ENCODE measurements at regions of chr21 and their contacts with region 1.

Region 1: GRCh38 chr21:45322960-45323461 is 35.3 kb upstream of the POFUT2 start:
- DNase-seq: no peak
- ATAC-seq: no peak
- H3K4me3 ChIP-seq: no peak overlapping the region
- H3K4me3 Mint-ChIP-seq: peak overlapping the region in 8 of 10 donors; percentile 44 to 89 (median 84)
- H3K27ac ChIP-seq: peak overlapping the region; percentile 74
- H3K27ac Mint-ChIP-seq: peak overlapping the region in 8 of 9 donors; percentile 16 to 100 (median 96)
- H3K4me1 ChIP-seq: peaks cover 0 to 26% of the 10 kb centered on the region in 2 donors
- H3K4me1 Mint-ChIP-seq: peaks cover 4 to 21% (median 15%) of the 10 kb centered on the region in 7 donors
- H3K27me3 ChIP-seq: no peaks in the 10 kb centered on the region
- H3K27me3 Mint-ChIP-seq: peaks cover 0 to 2% (median 0%) of the 10 kb centered on the region in 5 donors

Region 2: GRCh38 chr21:45287438-45288391 is 35.3 kb before region 1 on chr21 and contains the start of gene POFUT2:
- CTCF ChIA-PET with region 1: interaction called, 4 read pairs
- POLR2A ChIA-PET with region 1: interaction called, 18 read pairs
- intact Hi-C with region 1: loop called in 1 of 2 experiments (anchors 2 kb)
- DNase-seq: peak; percentile 95 to 100 (median 98)
- ATAC-seq: peak; percentile 91
- H3K4me3 ChIP-seq: peak within 1 kb of the TSS; percentile 68
- H3K4me3 Mint-ChIP-seq: peak within 1 kb of the TSS; percentile 68 to 88 (median 87)
- H3K27ac ChIP-seq: peak within 1 kb of the TSS; percentile 97
- H3K27ac Mint-ChIP-seq: peak within 1 kb of the TSS; percentile 72 to 93 (median 87)
- H3K4me1 ChIP-seq: peaks cover 7 to 16% of the 10 kb centered on the region in 2 donors
- H3K4me1 Mint-ChIP-seq: peaks cover 11 to 46% (median 30%) of the 10 kb centered on the region in 7 donors
- H3K27me3 ChIP-seq: no peaks in the 10 kb centered on the region
- H3K27me3 Mint-ChIP-seq: peaks cover 0 to 10% (median 0%) of the 10 kb centered on the region in 5 donors
- total RNA-seq, gene POFUT2: 20.1 to 53.3 (median 47.8) TPM

Region 3: DNA sequence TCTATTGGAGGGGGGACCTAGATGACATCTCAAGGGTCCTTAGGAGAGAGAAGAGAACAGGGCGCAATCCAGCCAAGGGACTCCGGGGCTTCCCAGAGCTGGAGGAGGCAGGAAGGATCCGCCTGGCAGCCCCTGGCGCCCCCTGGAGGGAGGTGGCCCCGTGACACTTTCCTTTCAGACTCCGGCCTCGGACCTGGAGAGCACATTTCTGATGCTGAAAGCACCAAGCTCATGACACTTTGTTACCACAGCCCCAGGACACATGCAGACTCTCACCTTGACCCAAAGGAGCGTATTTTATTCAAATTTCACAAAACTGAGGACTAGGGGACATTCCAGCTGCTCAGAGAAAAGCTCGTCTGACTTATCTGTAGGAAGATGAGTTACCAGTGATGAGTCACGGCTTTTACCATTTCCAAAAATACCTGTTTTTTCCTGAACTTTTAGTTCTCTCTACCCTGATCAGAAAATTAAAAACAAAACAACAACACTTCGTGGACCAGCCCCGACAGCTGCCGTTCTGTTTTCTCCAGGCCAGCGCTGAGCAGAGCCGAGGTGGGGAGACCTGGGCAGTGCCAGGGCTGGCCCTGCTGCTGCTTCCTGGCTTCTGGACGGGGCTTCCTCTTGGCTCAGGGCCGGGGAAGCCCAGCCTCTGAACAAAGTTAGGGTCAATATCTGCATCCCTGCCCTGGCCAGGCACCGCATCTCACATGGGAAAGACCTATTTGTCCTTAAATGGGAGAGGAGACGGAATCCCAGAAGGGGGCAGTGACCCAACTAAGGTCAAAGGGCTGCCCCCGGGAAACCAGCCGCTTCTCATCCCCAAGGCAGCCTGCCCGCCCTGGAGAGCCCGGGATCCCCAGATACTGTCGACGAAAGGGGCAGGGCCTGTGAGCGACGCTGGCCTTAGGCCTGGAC is 13.7 kb before region 1 on chr21:
- CTCF ChIA-PET with region 1: interaction called, 5 read pairs
- POLR2A ChIA-PET with region 1: interaction called, 5 read pairs
- intact Hi-C with region 1: loop called in 1 of 2 experiments (anchors 2 kb)
- DNase-seq: peak in 3 of 9 donors; percentile 19 to 52 (median 44)
- ATAC-seq: peak; percentile 63
- H3K4me3 ChIP-seq: no peak overlapping the region
- H3K4me3 Mint-ChIP-seq: no peak overlapping the region
- H3K27ac ChIP-seq: peak overlapping the region; percentile 19
- H3K27ac Mint-ChIP-seq: peak overlapping the region in 3 of 9 donors; percentile 11 to 65 (median 28)
- H3K4me1 ChIP-seq: peaks cover 0 to 10% of the 10 kb centered on the region in 2 donors
- H3K4me1 Mint-ChIP-seq: peaks cover 0 to 27% (median 8%) of the 10 kb centered on the region in 7 donors
- H3K27me3 ChIP-seq: no peaks in the 10 kb centered on the region
- H3K27me3 Mint-ChIP-seq: peaks cover 0 to 11% (median 0%) of the 10 kb centered on the region in 5 donors

Region 4: GRCh38 chr21:46624050-46624449 is 1301.0 kb after region 1 on chr21:
- CTCF ChIA-PET with region 1: no interaction called
- POLR2A ChIA-PET with region 1: no interaction called
- intact Hi-C with region 1: no loop called
- DNase-seq: no peak
- ATAC-seq: no peak
- H3K4me3 ChIP-seq: no peak overlapping the region
- H3K4me3 Mint-ChIP-seq: peak overlapping the region in 2 of 10 donors; percentile 37 to 59
- H3K27ac ChIP-seq: peak overlapping the region; percentile 53
- H3K27ac Mint-ChIP-seq: peak overlapping the region in 7 of 9 donors; percentile 81 to 98 (median 96)
- H3K4me1 ChIP-seq: peaks cover 35 to 78% of the 10 kb centered on the region in 2 donors
- H3K4me1 Mint-ChIP-seq: peaks cover 45 to 100% (median 86%) of the 10 kb centered on the region in 7 donors
- H3K27me3 ChIP-seq: no peaks in the 10 kb centered on the region
- H3K27me3 Mint-ChIP-seq: peaks cover 0 to 2% (median 0%) of the 10 kb centered on the region in 5 donors

Measured in naive thymus-derived CD4-positive, alpha-beta T cell (primary cell).